Spleen (tissue), 13 donors: ENCODE measurements at regions of chr12 and their contacts with region 1.

Region 1: DNA sequence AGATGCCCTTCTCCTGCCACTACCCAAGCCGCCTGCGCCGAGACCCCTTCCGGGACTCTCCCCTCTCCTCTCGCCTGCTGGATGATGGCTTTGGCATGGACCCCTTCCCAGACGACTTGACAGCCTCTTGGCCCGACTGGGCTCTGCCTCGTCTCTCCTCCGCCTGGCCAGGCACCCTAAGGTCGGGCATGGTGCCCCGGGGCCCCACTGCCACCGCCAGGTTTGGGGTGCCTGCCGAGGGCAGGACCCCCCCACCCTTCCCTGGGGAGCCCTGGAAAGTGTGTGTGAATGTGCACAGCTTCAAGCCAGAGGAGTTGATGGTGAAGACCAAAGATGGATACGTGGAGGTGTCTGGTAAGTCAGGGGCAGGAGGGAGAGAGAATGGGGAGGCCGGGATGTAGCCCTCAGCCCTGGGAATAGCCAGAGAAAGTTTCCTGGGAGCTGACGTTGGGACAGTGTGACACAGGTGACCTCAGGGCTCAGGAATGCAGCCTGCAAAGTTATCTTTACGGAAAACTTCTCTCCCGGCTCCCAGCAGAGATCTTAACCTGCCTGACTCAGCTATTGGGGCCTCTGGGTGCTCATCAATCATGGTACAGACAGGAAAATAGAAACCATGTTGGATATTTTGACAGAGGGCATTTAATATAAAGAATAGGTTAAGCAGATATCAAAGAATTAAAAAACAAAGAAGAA is 743 bp downstream of the HSPB8 start:
- DNase-seq: no peak
- H3K4me3 ChIP-seq: peak overlapping the region; percentile 33 to 73 (median 48)
- H3K27ac ChIP-seq: peak overlapping the region; percentile 54 to 85 (median 80)
- H3K4me1 ChIP-seq: peaks cover 0 to 29% (median 3%) of the 10 kb centered on the region in 6 donors
- H3K27me3 ChIP-seq: peaks cover 0 to 33% (median 0%) of the 10 kb centered on the region in 7 donors
- CTCF ChIP-seq: no peak
- POLR2A ChIP-seq: no peak

Region 2: DNA sequence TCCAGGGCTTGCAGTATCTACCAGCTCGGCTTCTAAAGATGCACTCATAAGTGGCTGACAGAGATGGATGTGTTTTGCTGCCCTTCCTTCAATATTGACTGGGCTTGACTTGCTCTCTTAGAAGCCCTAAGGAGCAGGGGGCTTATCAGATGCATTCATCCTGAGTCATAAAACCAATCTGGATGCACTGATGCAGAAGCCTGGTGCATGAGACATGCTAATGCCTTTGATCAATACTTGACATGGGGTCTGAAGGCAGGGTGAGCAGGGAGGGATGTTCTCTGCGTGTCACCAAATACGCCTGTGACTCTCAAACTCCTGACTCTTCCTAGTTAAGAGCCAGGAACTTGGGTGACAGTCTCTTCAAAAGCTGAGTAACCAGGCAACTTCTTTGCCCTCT is 78.5 kb before region 1 on chr12:
- intact Hi-C with region 1: no loop called
- DNase-seq: no peak
- H3K4me3 ChIP-seq: no peak overlapping the region
- H3K27ac ChIP-seq: no peak overlapping the region
- H3K4me1 ChIP-seq: no peaks in the 10 kb centered on the region
- H3K27me3 ChIP-seq: no peaks in the 10 kb centered on the region
- CTCF ChIP-seq: no peak
- POLR2A ChIP-seq: no peak

Region 3: DNA sequence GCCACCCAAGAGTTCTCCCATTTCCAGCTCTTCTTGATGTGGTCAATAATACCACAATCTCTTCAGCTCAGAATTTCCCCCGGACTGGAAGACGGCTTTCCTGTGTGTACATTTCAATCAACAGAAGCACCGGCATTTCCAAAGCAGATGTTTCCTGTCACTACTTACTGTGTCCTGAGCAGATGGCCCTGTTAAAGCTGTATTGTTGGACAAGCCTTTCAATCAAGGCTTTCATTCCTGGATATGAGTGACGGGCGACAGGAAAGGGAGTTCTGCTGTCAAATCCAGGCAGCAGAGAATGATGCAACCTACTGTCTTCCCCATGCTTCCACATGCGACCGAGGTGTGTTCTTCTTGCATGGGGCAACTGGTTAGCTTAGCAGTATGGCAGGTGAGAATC is 78.7 kb after region 1 on chr12:
- intact Hi-C with region 1: loop called (anchors 10 kb)
- DNase-seq: no peak
- H3K4me3 ChIP-seq: no peak overlapping the region
- H3K27ac ChIP-seq: peak overlapping the region in 7 of 8 donors; percentile 9 to 63 (median 45)
- H3K4me1 ChIP-seq: peaks cover 0 to 19% (median 4%) of the 10 kb centered on the region in 6 donors
- H3K27me3 ChIP-seq: peaks cover 0 to 6% (median 0%) of the 10 kb centered on the region in 7 donors
- CTCF ChIP-seq: peak in 1 of 11 experiments; percentile 11
- POLR2A ChIP-seq: no peak